ENCODE measurements at regions of chrX and their contacts with region 1.

Region 1: DNA sequence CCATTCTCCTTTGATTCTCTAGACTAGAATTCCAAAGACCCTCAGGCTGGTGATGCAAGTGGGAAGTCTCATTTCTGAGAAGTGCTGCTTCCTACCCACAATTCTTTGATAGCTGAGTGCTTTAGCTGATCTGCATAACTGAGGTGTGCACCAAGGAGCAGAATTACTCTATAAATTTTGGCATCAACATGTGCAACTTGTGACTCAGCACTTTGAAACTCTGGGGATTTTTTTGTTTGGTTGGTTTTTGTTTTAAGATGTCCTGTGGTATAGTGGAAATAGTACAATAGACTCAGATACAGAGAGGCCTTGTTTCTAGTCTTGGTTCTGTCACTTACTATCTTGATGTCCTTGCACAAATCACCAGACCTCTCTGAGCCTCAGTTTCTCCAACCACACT is 148.4 kb downstream of the AR start:
- DNase-seq: no peak
- H3K4me3 ChIP-seq: no peak overlapping the region
- H3K27ac ChIP-seq: no peak overlapping the region
- H3K4me1 ChIP-seq: no peaks in the 10 kb centered on the region
- H3K27me3 ChIP-seq: no peaks in the 10 kb centered on the region
- CTCF ChIP-seq: no peak

Region 2: GRCh38 chrX:67543818-67544217 is 148.4 kb before region 1 on chrX and contains the start of gene AR:
- CTCF ChIA-PET with region 1: no interaction called
- POLR2A ChIA-PET with region 1: no interaction called
- intact Hi-C with region 1: loop called (anchors 10 kb)
- DNase-seq: peak in 1 of 2 experiments; percentile 29
- H3K4me3 ChIP-seq: peak within 1 kb of the TSS; percentile 41; the same call in 1 of the 2 replicates
- H3K27ac ChIP-seq: no peak within 1 kb of the TSS
- H3K4me1 ChIP-seq: no peaks in the 10 kb centered on the region
- H3K27me3 ChIP-seq: peaks cover 37% of the 10 kb centered on the region
- CTCF ChIP-seq: no peak
- total RNA-seq, gene AR: 1.7 and 3.4 TPM in 2 replicates

Measured in PC-9 (cell line).